K562 (cell line): ENCODE measurements at regions of chr2 and their contacts with region 1.

Region 1: GRCh38 chr2:168118733-168119514 is 128.5 kb downstream of the STK39 start:
- DNase-seq: peak; percentile 32 to 76 (median 34)
- ATAC-seq: peak; percentile 94
- H3K4me3 ChIP-seq: no peak overlapping the region
- H3K27ac ChIP-seq: no peak overlapping the region
- H3K4me1 ChIP-seq: no peaks in the 10 kb centered on the region
- H3K27me3 ChIP-seq: 0 out of 5 replicates have a peak, but pooled peaks cover 0 to 3% of the 10 kb centered on the region in 2 experiments
- CTCF ChIP-seq: peak; percentile 54 to 87 (median 72); a peak in 4 of 6 replicates
- EP300 ChIP-seq: no peak
- POLR2A ChIP-seq: no peak
- RAD21 ChIP-seq: peak; percentile 88 to 90

Region 2: DNA sequence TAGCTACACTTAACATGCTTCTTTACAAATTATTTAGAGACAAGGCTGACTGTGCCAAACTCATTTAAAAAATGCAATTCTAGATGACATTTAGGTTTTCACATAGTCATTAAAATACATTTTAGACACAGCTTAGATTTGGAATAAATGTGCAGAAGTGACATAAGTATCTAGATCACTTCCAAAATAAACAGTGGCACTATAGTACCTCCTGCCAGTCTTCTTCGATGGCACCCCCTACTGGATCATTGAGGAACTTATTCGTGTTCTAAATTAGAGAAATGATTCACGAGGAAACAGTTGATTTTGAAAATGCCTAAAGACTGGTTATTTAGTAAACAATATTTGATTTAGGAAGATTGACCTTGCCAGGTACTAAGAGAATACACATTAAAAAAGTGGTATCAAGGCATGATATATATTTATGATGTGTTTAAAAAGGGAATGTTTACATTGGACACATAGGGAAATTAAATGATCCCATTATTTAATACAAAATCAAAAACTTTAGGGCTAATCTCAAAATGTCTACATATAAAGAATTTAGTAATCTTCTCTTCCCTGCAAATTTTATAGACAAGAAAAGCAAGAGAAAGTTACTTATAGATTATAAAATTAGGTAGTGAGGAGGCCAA is 906.8 kb before region 1 on chr2:
- CTCF ChIA-PET with region 1: no interaction called
- POLR2A ChIA-PET with region 1: no interaction called
- in situ Hi-C with region 1: loop called (anchors 10 kb)
- intact Hi-C with region 1: no loop called
- DNase-seq: peak; percentile 7 to 42 (median 24)
- ATAC-seq: no peak
- H3K4me3 ChIP-seq: no peak overlapping the region
- H3K27ac ChIP-seq: no peak overlapping the region
- H3K4me1 ChIP-seq: no peaks in the 10 kb centered on the region
- H3K27me3 ChIP-seq: no peaks in the 10 kb centered on the region
- CTCF ChIP-seq: peak in 2 of 3 experiments; percentile 30 to 34; a peak in 3 of 6 replicates
- EP300 ChIP-seq: no peak
- POLR2A ChIP-seq: no peak
- RAD21 ChIP-seq: peak in 1 of 2 experiments; percentile 48; a peak in 2 of 4 replicates

Region 3: GRCh38 chr2:167544602-167545001 is 574.3 kb before region 1 on chr2:
- CTCF ChIA-PET with region 1: no interaction called
- POLR2A ChIA-PET with region 1: no interaction called
- in situ Hi-C with region 1: no loop called
- intact Hi-C with region 1: loop called (anchors 10 kb)
- DNase-seq: peak in 2 of 4 experiments; percentile 9 to 46
- ATAC-seq: peak; percentile 84
- H3K4me3 ChIP-seq: peak overlapping the region; percentile 20; the same call in 1 of the 2 replicates
- H3K27ac ChIP-seq: no peak overlapping the region
- H3K4me1 ChIP-seq: no peaks in the 10 kb centered on the region
- H3K27me3 ChIP-seq: no peaks in the 10 kb centered on the region
- CTCF ChIP-seq: no peak
- EP300 ChIP-seq: no peak
- POLR2A ChIP-seq: no peak
- RAD21 ChIP-seq: no peak

Region 4: GRCh38 chr2:167869200-167869599 is 249.7 kb before region 1 on chr2:
- CTCF ChIA-PET with region 1: no interaction called
- POLR2A ChIA-PET with region 1: no interaction called
- in situ Hi-C with region 1: no loop called
- intact Hi-C with region 1: loop called (anchors 5 kb)
- DNase-seq: no peak
- ATAC-seq: no peak
- H3K4me3 ChIP-seq: no peak overlapping the region
- H3K27ac ChIP-seq: no peak overlapping the region
- H3K4me1 ChIP-seq: no peaks in the 10 kb centered on the region
- H3K27me3 ChIP-seq: no peaks in the 10 kb centered on the region
- CTCF ChIP-seq: peak; percentile 9 to 32 (median 31); a peak in 3 of 6 replicates
- EP300 ChIP-seq: no peak
- POLR2A ChIP-seq: no peak
- RAD21 ChIP-seq: peak in 1 of 2 experiments; percentile 25; a peak in 1 of 4 replicates